Mammary epithelial cell (primary cell): ENCODE measurements at regions of chr9 and their contacts with region 1.

Region 1: DNA sequence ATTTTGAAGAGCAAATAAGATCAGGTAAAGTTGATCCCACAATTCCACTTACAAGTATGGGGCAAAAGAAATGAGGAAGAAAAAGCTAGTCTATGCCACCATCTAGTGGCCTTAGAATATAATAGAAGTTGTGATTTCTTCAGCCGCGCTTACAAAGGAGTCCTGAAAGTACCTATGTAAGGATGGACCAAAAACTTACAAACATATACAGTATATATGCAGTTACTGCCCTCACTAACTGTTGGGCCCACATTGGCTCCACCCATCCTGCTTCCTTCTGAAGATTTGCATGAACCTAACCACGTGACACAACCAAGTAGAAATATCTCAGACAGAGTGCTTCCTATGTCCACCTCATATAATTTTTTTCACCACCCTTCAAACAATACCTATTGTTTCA is 11.7 kb upstream of the OR13D1 start:
- DNase-seq: peak; percentile 41
- H3K4me3 ChIP-seq: no peak overlapping the region
- H3K27ac ChIP-seq: no peak overlapping the region
- H3K4me1 ChIP-seq: no peaks in the 10 kb centered on the region
- H3K27me3 ChIP-seq: no peaks in the 10 kb centered on the region
- CTCF ChIP-seq: peak; percentile 29 to 54

Region 2: DNA sequence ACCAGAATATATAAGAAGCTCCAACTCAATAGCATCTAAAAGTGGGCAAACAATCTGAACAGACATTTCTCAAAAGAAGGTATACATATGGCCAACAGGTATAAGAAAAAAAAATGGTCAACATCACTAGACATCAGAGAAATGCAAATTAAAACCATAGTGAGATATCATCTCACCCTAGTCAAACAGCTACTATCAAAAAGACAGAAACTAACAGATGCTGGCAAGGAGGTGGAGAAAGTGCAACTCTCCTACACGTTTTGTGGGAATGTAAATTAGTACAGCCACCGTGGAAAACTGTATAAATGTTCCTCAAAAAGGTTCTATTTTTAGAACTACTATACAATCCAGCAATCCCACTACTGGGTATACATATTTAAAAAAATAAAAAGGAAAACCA is 788.5 kb before region 1 on chr9:
- CTCF ChIA-PET with region 1: no interaction called
- dilution Hi-C with region 1: no loop called
- in situ Hi-C with region 1: no loop called
- intact Hi-C with region 1: no loop called
- DNase-seq: no peak
- H3K4me3 ChIP-seq: no peak overlapping the region
- H3K27ac ChIP-seq: no peak overlapping the region
- H3K4me1 ChIP-seq: no peaks in the 10 kb centered on the region
- H3K27me3 ChIP-seq: no peaks in the 10 kb centered on the region
- CTCF ChIP-seq: no peak

Region 3: DNA sequence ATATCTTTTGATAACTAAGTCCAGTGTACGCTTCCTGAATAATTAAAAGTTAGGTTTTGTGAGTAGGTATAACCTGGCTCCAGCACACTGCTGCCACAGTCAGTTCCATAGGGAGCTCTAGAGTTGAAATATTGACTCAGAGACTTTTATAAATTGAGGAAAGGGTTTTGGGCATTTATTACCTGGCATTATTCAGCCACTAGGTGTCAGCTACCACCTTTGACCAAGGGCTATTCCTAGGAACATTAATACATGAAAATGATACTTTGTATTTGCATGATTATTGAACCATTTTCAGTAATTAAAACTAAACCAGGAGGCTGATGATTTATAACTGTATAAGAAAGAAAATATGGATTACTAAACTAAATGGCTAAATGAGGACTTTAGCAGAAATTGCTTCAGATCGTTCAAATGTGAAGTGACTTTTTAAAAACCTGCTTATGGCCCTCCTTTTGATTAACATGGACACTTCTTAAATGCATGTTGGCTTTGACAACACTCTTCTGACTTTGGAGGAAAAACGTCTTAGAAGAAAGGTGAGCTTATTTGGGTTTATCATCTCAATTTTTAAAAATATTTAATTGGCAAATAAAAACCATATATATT is 505.5 kb before region 1 on chr9:
- CTCF ChIA-PET with region 1: no interaction called
- dilution Hi-C with region 1: no loop called
- in situ Hi-C with region 1: no loop called
- intact Hi-C with region 1: loop called (anchors 2 kb)
- DNase-seq: peak; percentile 32
- H3K4me3 ChIP-seq: no peak overlapping the region
- H3K27ac ChIP-seq: no peak overlapping the region
- H3K4me1 ChIP-seq: no peaks in the 10 kb centered on the region
- H3K27me3 ChIP-seq: no peaks in the 10 kb centered on the region
- CTCF ChIP-seq: peak; percentile 67 to 76

Region 4: DNA sequence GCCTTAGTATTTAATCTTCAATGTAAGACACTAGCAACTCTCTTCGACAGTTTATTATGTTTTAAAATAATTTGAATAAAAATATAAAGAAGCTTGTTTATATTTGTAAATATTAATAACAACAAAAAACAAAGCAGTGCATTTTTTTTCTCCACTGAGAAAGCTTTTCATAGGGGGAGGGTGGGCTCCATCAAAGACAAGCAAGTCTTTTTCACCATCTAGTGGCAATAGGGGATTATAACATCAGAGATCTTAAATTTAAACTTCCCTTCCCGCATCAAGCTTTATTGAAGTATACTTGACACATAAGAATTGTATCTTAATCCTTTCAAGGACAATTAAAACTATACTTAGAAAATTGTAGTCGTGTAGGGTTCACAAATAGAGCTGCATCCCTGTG is 187.8 kb before region 1 on chr9:
- CTCF ChIA-PET with region 1: no interaction called
- dilution Hi-C with region 1: no loop called
- in situ Hi-C with region 1: loop called in 1 of 2 experiments (anchors 25 kb)
- intact Hi-C with region 1: loop called (anchors 1 kb)
- DNase-seq: no peak
- H3K4me3 ChIP-seq: no peak overlapping the region
- H3K27ac ChIP-seq: no peak overlapping the region
- H3K4me1 ChIP-seq: no peaks in the 10 kb centered on the region
- H3K27me3 ChIP-seq: no peaks in the 10 kb centered on the region
- CTCF ChIP-seq: peak; percentile 14 to 23

Region 5: GRCh38 chr9:104608336-104608735 is 74.3 kb before region 1 on chr9:
- CTCF ChIA-PET with region 1: no interaction called
- dilution Hi-C with region 1: no loop called
- in situ Hi-C with region 1: no loop called
- intact Hi-C with region 1: loop called (anchors 2 kb)
- DNase-seq: no peak
- H3K4me3 ChIP-seq: no peak overlapping the region
- H3K27ac ChIP-seq: no peak overlapping the region
- H3K4me1 ChIP-seq: no peaks in the 10 kb centered on the region
- H3K27me3 ChIP-seq: no peaks in the 10 kb centered on the region
- CTCF ChIP-seq: peak; percentile 23 to 39

Region 6: DNA sequence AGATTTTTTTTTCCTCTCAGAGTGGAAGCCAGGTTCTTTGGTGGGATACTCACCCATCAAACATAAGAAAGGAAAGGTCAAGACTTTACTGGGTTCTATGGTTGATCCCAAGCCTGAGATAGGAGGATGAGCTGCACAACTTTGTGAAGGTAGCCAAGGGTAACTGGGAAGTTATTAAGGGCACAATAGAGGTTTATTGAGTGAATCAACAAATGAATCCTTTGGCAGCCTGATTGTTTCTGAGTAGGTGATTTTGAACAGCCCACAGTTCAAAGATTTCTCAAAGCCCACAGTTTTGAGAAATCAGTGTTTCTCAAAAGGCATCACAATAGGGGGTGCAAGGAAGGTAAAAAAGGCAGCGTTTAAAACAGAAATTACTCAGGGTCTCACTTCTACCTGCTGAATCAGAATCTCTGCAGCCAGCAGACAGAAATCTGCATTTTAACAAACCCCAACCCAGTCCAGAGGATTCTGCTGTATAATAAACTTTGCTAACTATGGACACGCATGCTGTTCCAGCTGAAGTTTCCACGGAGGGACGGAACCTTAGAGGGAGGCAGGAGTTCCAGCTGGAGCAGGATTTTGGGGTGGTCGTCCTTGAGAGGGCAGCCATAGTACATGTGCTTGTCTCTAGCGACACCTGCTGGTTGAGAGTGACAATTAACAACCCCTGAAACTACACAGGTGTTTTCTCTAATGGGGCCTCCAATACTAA is 732.5 kb after region 1 on chr9:
- CTCF ChIA-PET with region 1: no interaction called
- dilution Hi-C with region 1: no loop called
- in situ Hi-C with region 1: no loop called
- intact Hi-C with region 1: loop called (anchors 5 kb)
- DNase-seq: peak; percentile 22
- H3K4me3 ChIP-seq: no peak overlapping the region
- H3K27ac ChIP-seq: no peak overlapping the region
- H3K4me1 ChIP-seq: no peaks in the 10 kb centered on the region
- H3K27me3 ChIP-seq: no peaks in the 10 kb centered on the region
- CTCF ChIP-seq: peak; percentile 71 to 86